Mucosa of descending colon (tissue), 3 donors: ENCODE measurements at regions of chr2 and their contacts with region 1.

Region 1: DNA sequence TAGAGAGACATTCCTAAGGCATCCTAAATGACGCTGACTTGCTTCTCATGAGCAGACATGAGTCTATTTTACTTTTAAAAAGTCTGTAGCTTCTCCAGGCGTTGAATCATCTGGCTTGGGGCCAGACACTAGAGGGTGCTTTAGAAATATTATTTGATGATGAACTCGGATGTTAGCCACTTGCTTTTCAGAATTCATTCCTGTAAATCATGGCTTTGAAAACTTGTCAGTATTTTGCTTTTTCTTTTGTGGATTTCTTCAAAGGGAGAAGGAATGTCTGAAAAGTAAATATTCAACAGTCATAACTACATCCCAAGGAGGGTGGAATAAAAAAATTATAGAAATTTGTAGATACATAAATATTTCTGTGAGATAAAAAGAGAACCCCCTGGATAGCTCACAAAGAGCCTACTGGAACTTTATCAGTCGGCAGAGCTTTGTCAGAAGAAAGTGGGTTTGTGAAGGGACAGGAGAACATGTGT is 370.8 kb downstream of the OSR1 start:
- DNase-seq: peak in 2 of 3 donors; percentile 24 to 69
- ATAC-seq: no peak
- H3K4me3 ChIP-seq: no peak overlapping the region
- H3K4me1 ChIP-seq: no peaks in the 10 kb centered on the region
- CTCF ChIP-seq: no peak

Region 2: GRCh38 chr2:19349911-19350677 is 362.5 kb after region 1 on chr2:
- intact Hi-C with region 1: loop called in 1 of 2 experiments (anchors 10 kb)
- DNase-seq: peak; percentile 65 to 81 (median 78)
- ATAC-seq: peak; percentile 57
- H3K4me3 ChIP-seq: no peak overlapping the region
- H3K4me1 ChIP-seq: peaks cover 16% of the 10 kb centered on the region
- CTCF ChIP-seq: peak; percentile 76